ENCODE measurements at regions of chr12 and their contacts with region 1.

Region 1: GRCh38 chr12:1795785-1796514 is 24.4 kb upstream of the LRTM2 start:
- DNase-seq: peak; percentile 90 to 97 (median 94)
- ATAC-seq: peak; percentile 93
- H3K4me3 ChIP-seq: peak overlapping the region; percentile 80 to 82
- H3K4me3 Mint-ChIP-seq: peak overlapping the region; percentile 90
- H3K27ac ChIP-seq: peak overlapping the region; percentile 54 to 80
- H3K27ac Mint-ChIP-seq: peak overlapping the region; percentile 91
- H3K4me1 ChIP-seq: peaks cover 22% of the 10 kb centered on the region
- H3K4me1 Mint-ChIP-seq: peaks cover 20% of the 10 kb centered on the region
- H3K27me3 ChIP-seq: no peaks in the 10 kb centered on the region
- H3K27me3 Mint-ChIP-seq: no peaks in the 10 kb centered on the region
- CTCF ChIP-seq: peak; percentile 92

Region 2: GRCh38 chr12:1634590-1635191 is 161.3 kb before region 1 on chr12:
- CTCF ChIA-PET with region 1: interaction called, 67 read pairs
- POLR2A ChIA-PET with region 1: interaction called, 3 read pairs
- intact Hi-C with region 1: loop called (anchors 1 kb)
- DNase-seq: peak; percentile 18 to 71 (median 64)
- ATAC-seq: peak; percentile 52
- H3K4me3 ChIP-seq: no peak overlapping the region
- H3K4me3 Mint-ChIP-seq: no peak overlapping the region
- H3K27ac ChIP-seq: no peak overlapping the region
- H3K27ac Mint-ChIP-seq: no peak overlapping the region
- H3K4me1 ChIP-seq: peaks cover 13% of the 10 kb centered on the region
- H3K4me1 Mint-ChIP-seq: peaks cover 13% of the 10 kb centered on the region
- H3K27me3 ChIP-seq: peaks cover 12 to 21% of the 10 kb centered on the region in 2 experiments
- H3K27me3 Mint-ChIP-seq: peaks cover 42% of the 10 kb centered on the region
- CTCF ChIP-seq: peak; percentile 70

Region 3: GRCh38 chr12:1670815-1671268 is 125.1 kb before region 1 on chr12:
- CTCF ChIA-PET with region 1: interaction called, 12 read pairs
- POLR2A ChIA-PET with region 1: no interaction called
- intact Hi-C with region 1: no loop called
- DNase-seq: no peak
- ATAC-seq: no peak
- H3K4me3 ChIP-seq: no peak overlapping the region
- H3K4me3 Mint-ChIP-seq: no peak overlapping the region
- H3K27ac ChIP-seq: no peak overlapping the region
- H3K27ac Mint-ChIP-seq: no peak overlapping the region
- H3K4me1 ChIP-seq: peaks cover 21% of the 10 kb centered on the region
- H3K4me1 Mint-ChIP-seq: peaks cover 35% of the 10 kb centered on the region
- H3K27me3 ChIP-seq: no peaks in the 10 kb centered on the region
- H3K27me3 Mint-ChIP-seq: no peaks in the 10 kb centered on the region
- CTCF ChIP-seq: no peak

Region 4: GRCh38 chr12:1820191-1820895 is 24.4 kb after region 1 on chr12 and contains the start of gene LRTM2:
- CTCF ChIA-PET with region 1: no interaction called
- POLR2A ChIA-PET with region 1: no interaction called
- intact Hi-C with region 1: no loop called
- DNase-seq: no peak
- ATAC-seq: no peak
- H3K4me3 ChIP-seq: no peak within 1 kb of the TSS
- H3K4me3 Mint-ChIP-seq: no peak within 1 kb of the TSS
- H3K27ac ChIP-seq: no peak within 1 kb of the TSS
- H3K27ac Mint-ChIP-seq: no peak within 1 kb of the TSS
- H3K4me1 ChIP-seq: no peaks in the 10 kb centered on the region
- H3K4me1 Mint-ChIP-seq: no peaks in the 10 kb centered on the region
- H3K27me3 ChIP-seq: no peaks in the 10 kb centered on the region
- H3K27me3 Mint-ChIP-seq: peaks cover 35% of the 10 kb centered on the region
- CTCF ChIP-seq: no peak
- total RNA-seq, gene LRTM2: not detected

Region 5: GRCh38 chr12:1932264-1932777 is 136.4 kb after region 1 on chr12:
- CTCF ChIA-PET with region 1: interaction called, 14 read pairs
- POLR2A ChIA-PET with region 1: no interaction called
- intact Hi-C with region 1: no loop called
- DNase-seq: peak in 1 of 9 experiments; percentile 38
- ATAC-seq: no peak
- H3K4me3 ChIP-seq: no peak overlapping the region
- H3K4me3 Mint-ChIP-seq: no peak overlapping the region
- H3K27ac ChIP-seq: no peak overlapping the region
- H3K27ac Mint-ChIP-seq: no peak overlapping the region
- H3K4me1 ChIP-seq: peaks cover 5% of the 10 kb centered on the region
- H3K4me1 Mint-ChIP-seq: peaks cover 9% of the 10 kb centered on the region
- H3K27me3 ChIP-seq: no peaks in the 10 kb centered on the region
- H3K27me3 Mint-ChIP-seq: no peaks in the 10 kb centered on the region
- CTCF ChIP-seq: no peak

Region 6: GRCh38 chr12:2034633-2035430 is 238.9 kb after region 1 on chr12:
- CTCF ChIA-PET with region 1: interaction called, 3 read pairs
- POLR2A ChIA-PET with region 1: interaction called, 4 read pairs
- intact Hi-C with region 1: loop called (anchors 1 kb)
- DNase-seq: peak; percentile 72 to 91 (median 83)
- ATAC-seq: peak; percentile 99
- H3K4me3 ChIP-seq: peak overlapping the region; percentile 49 to 51
- H3K4me3 Mint-ChIP-seq: peak overlapping the region; percentile 66
- H3K27ac ChIP-seq: no peak overlapping the region
- H3K27ac Mint-ChIP-seq: no peak overlapping the region
- H3K4me1 ChIP-seq: peaks cover 12% of the 10 kb centered on the region
- H3K4me1 Mint-ChIP-seq: peaks cover 15% of the 10 kb centered on the region
- H3K27me3 ChIP-seq: no peaks in the 10 kb centered on the region
- H3K27me3 Mint-ChIP-seq: peaks cover 29% of the 10 kb centered on the region
- CTCF ChIP-seq: peak; percentile 88

Region 7: DNA sequence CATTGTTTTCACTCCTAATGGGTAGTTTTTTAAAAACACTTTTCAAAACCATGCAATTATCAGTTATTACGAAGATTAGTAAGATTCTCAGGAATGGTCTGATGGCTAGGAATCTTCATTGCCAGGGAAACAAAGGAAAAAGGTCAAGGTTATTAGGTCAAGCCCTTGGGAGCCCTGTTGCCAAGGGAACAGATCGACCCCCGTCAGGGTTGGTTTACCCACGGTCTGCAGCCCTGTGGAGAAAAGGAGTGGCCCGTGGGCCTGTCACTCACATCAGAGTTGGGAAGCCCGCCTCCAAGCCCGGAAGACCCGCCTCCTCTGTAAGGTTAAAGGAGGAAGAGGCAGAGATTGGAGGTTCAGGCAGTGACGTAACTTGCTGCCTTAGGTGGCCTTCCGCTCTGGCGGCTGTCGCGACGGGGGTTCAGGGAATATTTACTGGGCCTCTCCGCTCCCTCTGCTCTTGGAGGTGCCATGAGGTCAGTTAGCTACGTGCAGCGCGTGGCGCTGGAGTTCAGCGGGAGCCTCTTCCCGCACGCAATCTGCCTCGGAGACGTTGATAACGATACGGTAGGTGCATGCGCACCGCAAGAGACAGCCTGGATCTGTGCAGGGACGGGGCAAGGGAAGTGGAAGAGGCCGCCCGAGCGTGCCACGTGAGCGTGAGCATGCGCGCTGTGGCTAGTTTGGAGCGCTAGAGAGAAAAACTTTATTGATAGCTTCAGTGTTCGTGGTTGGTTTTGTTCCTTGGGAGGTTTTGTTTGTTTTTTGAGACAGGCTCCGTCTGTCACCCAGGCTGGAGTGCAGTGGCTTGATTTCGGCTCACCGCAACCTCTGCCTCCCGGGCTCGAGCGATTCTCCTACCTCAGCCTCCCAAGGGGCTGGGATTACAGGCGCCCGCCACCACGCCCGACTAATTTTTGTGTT is 1016.6 kb after region 1 on chr12 and contains the start of gene ITFG2:
- CTCF ChIA-PET with region 1: no interaction called
- POLR2A ChIA-PET with region 1: no interaction called
- intact Hi-C with region 1: loop called (anchors 10 kb)
- DNase-seq: peak; percentile 90 to 99 (median 95)
- ATAC-seq: peak; percentile 92
- H3K4me3 ChIP-seq: peak within 1 kb of the TSS; percentile 66 to 80
- H3K4me3 Mint-ChIP-seq: peak within 1 kb of the TSS; percentile 100
- H3K27ac ChIP-seq: peak within 1 kb of the TSS; percentile 83 to 89
- H3K27ac Mint-ChIP-seq: peak within 1 kb of the TSS; percentile 100
- H3K4me1 ChIP-seq: peaks cover 31% of the 10 kb centered on the region
- H3K4me1 Mint-ChIP-seq: peaks cover 38% of the 10 kb centered on the region
- H3K27me3 ChIP-seq: no peaks in the 10 kb centered on the region
- H3K27me3 Mint-ChIP-seq: no peaks in the 10 kb centered on the region
- CTCF ChIP-seq: no peak
- total RNA-seq, gene ITFG2: 72.8 to 73.5 TPM